ENCODE measurements at regions of chr5 and their contacts with region 1.

Region 1: GRCh38 chr5:109688971-109689739 is 572 bp upstream of the MAN2A1 start:
- DNase-seq: peak; percentile 71 to 86
- ATAC-seq: peak; percentile 61 to 72
- H3K4me3 ChIP-seq: peak overlapping the region; percentile 88 to 98 (median 96)
- H3K27ac ChIP-seq: peak overlapping the region; percentile 94 to 99 (median 98)
- H3K4me1 ChIP-seq: peaks cover 23 to 35% of the 10 kb centered on the region in 2 donors
- H3K27me3 ChIP-seq: no peaks in the 10 kb centered on the region
- CTCF ChIP-seq: no peak
- POLR2A ChIP-seq: peak; percentile 94 to 95

Region 2: GRCh38 chr5:108727651-108728565 is 961.2 kb before region 1 on chr5:
- in situ Hi-C with region 1: loop called in 1 of 4 experiments (anchors 25 kb)
- intact Hi-C with region 1: loop called (anchors 5 kb)
- DNase-seq: peak; percentile 82 to 90
- ATAC-seq: peak; percentile 93 to 96
- H3K4me3 ChIP-seq: peak overlapping the region; percentile 74 to 90 (median 86)
- H3K27ac ChIP-seq: peak overlapping the region; percentile 84 to 91 (median 87)
- H3K4me1 ChIP-seq: peaks cover 13 to 15% of the 10 kb centered on the region in 2 donors
- H3K27me3 ChIP-seq: no peaks in the 10 kb centered on the region
- CTCF ChIP-seq: no peak
- POLR2A ChIP-seq: peak; percentile 52 to 64

Region 3: DNA sequence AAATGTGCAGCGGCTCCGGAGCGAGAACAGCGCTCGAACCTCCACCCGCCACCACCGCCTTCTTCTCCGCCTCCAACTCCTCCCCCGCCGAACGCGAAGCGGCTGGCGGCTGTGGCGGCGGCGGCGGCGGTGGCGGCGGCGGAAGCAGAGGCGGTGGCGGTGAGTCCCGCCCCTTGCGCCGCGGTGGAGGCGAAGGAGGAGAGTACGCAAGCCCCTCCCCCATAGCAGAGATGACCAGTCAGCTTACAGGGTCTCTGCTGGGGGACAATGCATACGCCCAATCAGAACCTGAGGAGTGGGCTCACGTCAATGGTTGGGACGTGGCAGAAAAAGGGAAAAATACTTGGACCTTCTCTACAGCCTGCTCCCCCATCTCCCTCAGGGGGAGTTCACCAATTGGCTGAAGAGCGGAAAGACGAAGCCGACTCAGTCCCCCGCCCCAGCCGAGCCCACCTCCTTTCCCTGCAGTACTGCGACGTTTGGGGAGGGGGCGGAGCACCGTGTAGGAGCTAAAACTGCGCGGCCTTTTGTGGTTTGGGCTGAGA is 279.2 kb before region 1 on chr5 and contains the start of gene PJA2:
- in situ Hi-C with region 1: no loop called
- intact Hi-C with region 1: loop called (anchors 1 kb)
- DNase-seq: peak; percentile 98 to 99
- ATAC-seq: peak; percentile 91 to 92
- H3K4me3 ChIP-seq: peak within 1 kb of the TSS; percentile 82 to 95 (median 88)
- H3K27ac ChIP-seq: peak within 1 kb of the TSS; percentile 94 to 99 (median 99)
- H3K4me1 ChIP-seq: peaks cover 38 to 46% of the 10 kb centered on the region in 2 donors
- H3K27me3 ChIP-seq: no peaks in the 10 kb centered on the region
- CTCF ChIP-seq: peak; percentile 23 to 59 (median 58)
- POLR2A ChIP-seq: peak; percentile 79 to 80
- total RNA-seq, gene PJA2: 37.6 to 64.9 (median 58.7) TPM

Region 4: GRCh38 chr5:110086658-110087388 is 397.7 kb after region 1 on chr5:
- in situ Hi-C with region 1: no loop called
- intact Hi-C with region 1: loop called (anchors 2 kb)
- DNase-seq: peak; percentile 28 to 72
- ATAC-seq: peak; percentile 84 to 87
- H3K4me3 ChIP-seq: no peak overlapping the region
- H3K27ac ChIP-seq: peak overlapping the region; percentile 24 to 54 (median 34)
- H3K4me1 ChIP-seq: no peaks in the 10 kb centered on the region
- H3K27me3 ChIP-seq: peaks cover 0 to 6% (median 0%) of the 10 kb centered on the region in 3 donors
- CTCF ChIP-seq: no peak
- POLR2A ChIP-seq: peak in 1 of 2 donors; percentile 11

Region 5: GRCh38 chr5:110738812-110739651 is 1049.9 kb after region 1 on chr5 and contains the start of gene SLC25A46:
- in situ Hi-C with region 1: no loop called
- intact Hi-C with region 1: loop called (anchors 10 kb)
- DNase-seq: peak; percentile 70 to 81
- ATAC-seq: peak; percentile 99 to 100
- H3K4me3 ChIP-seq: peak within 1 kb of the TSS; percentile 83 to 100 (median 95)
- H3K27ac ChIP-seq: peak within 1 kb of the TSS; percentile 88 to 93 (median 91)
- H3K4me1 ChIP-seq: peaks cover 10 to 16% of the 10 kb centered on the region in 2 donors
- H3K27me3 ChIP-seq: peaks cover 0 to 2% (median 0%) of the 10 kb centered on the region in 3 donors
- CTCF ChIP-seq: no peak
- POLR2A ChIP-seq: peak; percentile 46 to 60
- total RNA-seq, gene SLC25A46: 71.5 to 114 (median 99.7) TPM

Measured in gastrocnemius medialis (tissue), 4 donors.